Adrenal gland (tissue), 19 donors: ENCODE measurements at regions of chr1 and their contacts with region 1.

Region 1: GRCh38 chr1:165597883-165598675 is 33.0 kb upstream of the MGST3 start:
- DNase-seq: peak; percentile 92 to 99 (median 97)
- H3K4me3 ChIP-seq: peak overlapping the region in 2 of 4 donors; percentile 38 to 66
- H3K27ac ChIP-seq: peak overlapping the region in 3 of 5 donors; percentile 45 to 74 (median 58)
- H3K4me1 ChIP-seq: peaks cover 12 to 13% of the 10 kb centered on the region in 2 donors
- H3K27me3 ChIP-seq: peaks cover 9% of the 10 kb centered on the region
- CTCF ChIP-seq: no peak
- POLR2A ChIP-seq: no peak

Region 2: GRCh38 chr1:164689672-164690598 is 908.1 kb before region 1 on chr1:
- intact Hi-C with region 1: no loop called
- DNase-seq: peak in 4 of 7 donors; percentile 39 to 54 (median 42)
- H3K4me3 ChIP-seq: no peak overlapping the region
- H3K27ac ChIP-seq: peak overlapping the region in 3 of 5 donors; percentile 65 to 76 (median 69)
- H3K4me1 ChIP-seq: peaks cover 9 to 21% of the 10 kb centered on the region in 2 donors
- H3K27me3 ChIP-seq: no peaks in the 10 kb centered on the region
- CTCF ChIP-seq: no peak
- POLR2A ChIP-seq: no peak

Region 3: DNA sequence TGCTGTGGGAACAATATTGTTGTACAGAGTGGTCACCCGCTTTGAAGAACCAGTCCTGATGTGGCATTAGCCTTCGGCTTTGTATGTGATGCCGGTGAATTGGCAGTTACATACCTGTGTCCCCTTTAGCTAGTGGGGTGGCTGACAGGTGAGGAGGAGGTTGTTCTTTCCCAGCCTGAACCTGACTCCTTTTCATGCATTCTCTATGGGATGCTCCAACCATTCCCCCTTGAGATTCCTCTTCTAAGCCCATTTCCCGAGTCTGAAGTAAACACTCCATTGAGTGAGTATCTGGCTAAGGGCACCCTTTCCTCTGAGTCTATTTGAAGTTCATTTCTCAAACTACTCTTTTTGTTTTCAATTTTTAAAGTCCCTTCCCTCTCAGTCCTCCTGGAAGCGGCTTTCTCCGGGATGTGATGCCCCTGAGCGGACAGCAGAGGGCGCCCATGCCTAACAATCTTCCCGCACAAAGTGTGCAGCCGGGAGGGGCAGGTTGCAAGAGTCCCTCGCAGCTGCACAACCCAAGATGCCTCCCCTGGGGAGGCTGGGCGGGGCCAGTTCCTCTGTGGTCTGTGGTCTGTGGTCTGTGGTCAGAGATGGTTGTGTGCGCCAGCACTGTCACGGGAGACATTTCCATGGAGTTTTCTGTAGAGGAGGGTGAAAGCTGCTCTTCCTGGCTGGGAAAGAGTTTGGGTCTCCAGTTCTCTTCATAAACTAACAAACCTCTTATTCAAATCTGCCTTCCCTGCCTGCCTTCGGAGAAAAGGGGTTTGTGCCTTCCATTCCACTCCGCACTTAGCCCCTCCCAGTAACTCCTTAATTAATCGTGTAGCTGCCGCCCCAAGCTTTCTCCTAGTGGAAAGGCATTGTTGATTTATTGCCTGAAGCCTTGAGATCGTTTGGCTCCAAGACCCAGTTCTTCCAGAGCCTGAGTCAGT is 205.2 kb before region 1 on chr1:
- intact Hi-C with region 1: loop called in 1 of 2 experiments (anchors 2 kb)
- DNase-seq: peak; percentile 75 to 86 (median 76)
- H3K4me3 ChIP-seq: no peak overlapping the region
- H3K27ac ChIP-seq: no peak overlapping the region
- H3K4me1 ChIP-seq: peaks cover 0 to 5% of the 10 kb centered on the region in 2 donors
- H3K27me3 ChIP-seq: peaks cover 11% of the 10 kb centered on the region
- CTCF ChIP-seq: peak; percentile 81 to 96 (median 91)
- POLR2A ChIP-seq: no peak

Region 4: GRCh38 chr1:165703648-165704047 is 105.6 kb after region 1 on chr1:
- intact Hi-C with region 1: loop called in 1 of 2 experiments (anchors 10 kb)
- DNase-seq: no peak
- H3K4me3 ChIP-seq: no peak overlapping the region
- H3K27ac ChIP-seq: no peak overlapping the region
- H3K4me1 ChIP-seq: peaks cover 0 to 4% of the 10 kb centered on the region in 2 donors
- H3K27me3 ChIP-seq: no peaks in the 10 kb centered on the region
- CTCF ChIP-seq: no peak
- POLR2A ChIP-seq: no peak

Region 5: GRCh38 chr1:165768513-165769394 is 170.7 kb after region 1 on chr1 and contains the start of gene TMCO1:
- intact Hi-C with region 1: loop called in 1 of 2 experiments (anchors 10 kb)
- DNase-seq: peak; percentile 91 to 99 (median 97)
- H3K4me3 ChIP-seq: peak within 1 kb of the TSS; percentile 43 to 97 (median 55)
- H3K27ac ChIP-seq: peak within 1 kb of the TSS; percentile 72 to 98 (median 89)
- H3K4me1 ChIP-seq: peaks cover 12 to 29% of the 10 kb centered on the region in 2 donors
- H3K27me3 ChIP-seq: no peaks in the 10 kb centered on the region
- CTCF ChIP-seq: peak in 1 of 6 experiments; percentile 14
- POLR2A ChIP-seq: peak; percentile 65 to 86
- total RNA-seq, gene TMCO1: 60.0 to 218 (median 131) TPM

Region 6: GRCh38 chr1:165914136-165914798 is 316.2 kb after region 1 on chr1:
- intact Hi-C with region 1: loop called (anchors 5 to 10 kb)
- DNase-seq: peak; percentile 60 to 90 (median 69)
- H3K4me3 ChIP-seq: no peak overlapping the region
- H3K27ac ChIP-seq: no peak overlapping the region
- H3K4me1 ChIP-seq: no peaks in the 10 kb centered on the region
- H3K27me3 ChIP-seq: no peaks in the 10 kb centered on the region
- CTCF ChIP-seq: peak; percentile 72 to 96 (median 94)
- POLR2A ChIP-seq: no peak